ENCODE measurements at regions of chr2 and their contacts with region 1.

Region 1: GRCh38 chr2:226984750-226985582 is 149.1 kb downstream of the RHBDD1 start:
- DNase-seq: no peak
- ATAC-seq: peak; percentile 65 to 84

Region 2: DNA sequence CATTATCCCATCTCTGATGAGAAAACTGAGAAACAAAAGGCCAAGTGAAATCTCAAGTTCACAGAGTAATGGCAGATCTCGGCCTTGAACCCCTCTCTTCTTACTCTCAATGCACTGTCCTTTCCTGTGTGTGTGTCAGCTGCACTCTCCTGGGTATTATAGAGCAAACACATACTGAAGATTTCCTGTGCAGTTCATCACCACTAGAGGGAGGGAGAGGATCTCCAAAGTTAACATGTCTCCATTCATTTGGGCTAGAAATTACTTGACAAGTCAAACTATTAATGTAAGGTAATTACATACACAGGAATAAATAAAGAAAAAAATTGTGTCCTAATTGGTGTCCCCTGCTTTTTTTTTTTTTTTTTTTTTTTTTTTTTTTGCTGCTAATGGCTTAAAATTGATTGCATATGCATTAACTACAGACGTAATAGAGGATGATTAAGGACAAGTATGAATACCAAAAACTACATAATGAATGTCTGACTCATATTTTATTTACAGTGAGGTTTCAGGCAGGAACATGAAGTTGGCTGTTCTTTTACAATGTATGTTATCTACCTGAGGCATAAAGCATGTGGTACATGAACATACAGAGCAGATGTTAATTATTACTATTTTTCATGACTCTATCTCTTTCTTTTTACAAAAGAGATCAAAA is 1316.2 kb before region 1 on chr2:
- intact Hi-C with region 1: loop called in 1 of 2 experiments (anchors 2 kb)
- DNase-seq: no peak
- ATAC-seq: peak; percentile 61 to 68

Region 3: DNA sequence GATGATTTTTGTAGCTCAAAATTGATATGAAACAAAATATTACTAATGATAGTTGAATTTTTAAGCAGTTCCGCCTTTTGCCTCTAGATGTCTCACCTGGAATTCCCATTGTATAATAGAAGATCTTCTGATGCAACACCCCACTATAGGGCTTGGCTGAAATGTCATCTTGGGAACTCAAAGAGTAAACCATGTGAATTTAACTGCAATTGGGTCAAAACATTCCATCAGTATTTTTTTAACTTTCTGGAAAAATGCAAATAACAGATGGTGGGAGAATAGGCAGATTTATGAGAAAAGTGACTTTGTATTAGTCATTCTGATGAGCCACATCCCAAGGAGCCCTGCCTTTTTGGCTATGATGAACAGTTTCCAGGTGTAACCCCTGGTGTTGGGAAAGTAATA is 1095.5 kb before region 1 on chr2:
- intact Hi-C with region 1: loop called in 1 of 2 experiments (anchors 2 kb)
- DNase-seq: no peak
- ATAC-seq: peak; percentile 57

Region 4: DNA sequence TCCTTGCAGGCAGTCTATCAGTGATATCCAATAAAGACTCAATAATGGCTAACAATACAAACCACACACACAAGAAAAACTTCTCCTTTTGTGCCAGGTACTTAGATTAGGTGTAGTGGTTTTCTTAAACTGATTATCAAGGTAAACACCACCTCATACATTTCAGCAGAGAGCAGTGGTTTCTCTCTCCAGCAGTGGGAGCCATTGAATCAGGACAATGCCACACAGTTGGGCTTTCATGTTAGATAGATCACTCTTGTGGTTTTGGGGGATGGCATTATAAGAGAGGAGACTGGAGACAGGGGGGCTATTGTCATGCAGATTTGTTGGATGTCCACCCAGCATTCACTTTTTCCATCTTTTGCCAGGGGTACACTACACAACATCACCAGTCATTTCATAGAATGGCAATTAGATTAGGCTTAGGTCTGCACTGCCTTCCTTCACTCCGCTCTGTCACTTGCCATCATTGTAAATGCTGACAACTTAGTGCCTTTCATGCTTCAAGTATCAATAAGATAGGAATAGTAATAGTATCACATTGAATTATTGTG is 171.7 kb before region 1 on chr2:
- intact Hi-C with region 1: loop called in 1 of 2 experiments (anchors 5 kb)
- DNase-seq: no peak
- ATAC-seq: no peak

Region 5: DNA sequence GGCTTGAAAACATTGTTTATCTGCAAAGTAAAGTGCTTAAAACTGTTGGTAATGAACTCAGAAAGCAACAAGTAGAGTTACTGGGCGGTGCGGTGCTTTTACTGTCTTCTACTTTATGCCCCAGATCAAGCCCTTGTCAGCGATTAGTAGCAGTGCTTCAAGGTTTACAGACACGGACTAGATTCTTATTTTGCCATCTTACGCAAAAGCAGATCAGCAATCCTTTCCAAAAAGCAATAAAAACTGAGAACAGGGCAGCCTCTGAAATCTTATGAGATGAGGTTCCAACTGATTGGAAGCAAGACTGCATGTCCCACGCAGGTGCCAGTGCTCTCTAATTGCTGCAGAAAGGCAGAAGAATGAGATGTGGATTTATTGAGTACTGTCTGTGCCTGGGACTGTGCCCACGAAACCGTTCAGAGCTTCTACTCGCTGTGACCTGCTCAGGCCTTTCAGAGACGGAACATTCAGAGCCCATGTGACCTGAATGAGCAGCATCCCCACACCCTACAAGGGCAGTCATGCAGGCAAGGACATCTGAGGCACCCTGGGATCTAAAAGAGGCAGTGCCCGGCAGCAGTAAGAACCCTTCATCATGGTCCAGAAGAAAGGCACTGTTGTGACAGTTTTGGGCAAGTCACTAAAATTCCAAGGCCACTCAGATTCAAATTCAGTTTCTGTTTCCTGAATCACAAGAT is 195.2 kb after region 1 on chr2:
- intact Hi-C with region 1: no loop called
- DNase-seq: peak; percentile 49
- ATAC-seq: peak; percentile 86